Activated CD4-positive, alpha-beta memory T cell treated with anti-CD3 and anti-CD28 coated beads, Interleukin-2, amount 10 ng/mL, durations not matched to agents 7 days and 5 days (primary cell): ENCODE measurements at regions of chr12 and their contacts with region 1.

Region 1: GRCh38 chr12:68610370-68611093 is at the start of gene RAP1B:
- DNase-seq: peak; percentile 92
- H3K4me3 Mint-ChIP-seq: peak within 1 kb of the TSS; percentile 83
- H3K27ac Mint-ChIP-seq: peak within 1 kb of the TSS; percentile 94
- H3K4me1 Mint-ChIP-seq: peaks cover 38% of the 10 kb centered on the region
- H3K27me3 Mint-ChIP-seq: no peaks in the 10 kb centered on the region
- total RNA-seq, gene RAP1B: 290 to 291 TPM

Region 2: GRCh38 chr12:68331869-68332727 is 278.4 kb before region 1 on chr12 and contains the start of gene MDM1:
- CTCF ChIA-PET with region 1: interaction called, 4 read pairs
- POLR2A ChIA-PET with region 1: interaction called, 22 read pairs
- DNase-seq: peak; percentile 95
- H3K4me3 Mint-ChIP-seq: peak within 1 kb of the TSS; percentile 87
- H3K27ac Mint-ChIP-seq: peak within 1 kb of the TSS; percentile 65
- H3K4me1 Mint-ChIP-seq: peaks cover 42% of the 10 kb centered on the region
- H3K27me3 Mint-ChIP-seq: peaks cover 11% of the 10 kb centered on the region
- total RNA-seq, gene MDM1: 21.8 to 24.4 TPM

Region 3: DNA sequence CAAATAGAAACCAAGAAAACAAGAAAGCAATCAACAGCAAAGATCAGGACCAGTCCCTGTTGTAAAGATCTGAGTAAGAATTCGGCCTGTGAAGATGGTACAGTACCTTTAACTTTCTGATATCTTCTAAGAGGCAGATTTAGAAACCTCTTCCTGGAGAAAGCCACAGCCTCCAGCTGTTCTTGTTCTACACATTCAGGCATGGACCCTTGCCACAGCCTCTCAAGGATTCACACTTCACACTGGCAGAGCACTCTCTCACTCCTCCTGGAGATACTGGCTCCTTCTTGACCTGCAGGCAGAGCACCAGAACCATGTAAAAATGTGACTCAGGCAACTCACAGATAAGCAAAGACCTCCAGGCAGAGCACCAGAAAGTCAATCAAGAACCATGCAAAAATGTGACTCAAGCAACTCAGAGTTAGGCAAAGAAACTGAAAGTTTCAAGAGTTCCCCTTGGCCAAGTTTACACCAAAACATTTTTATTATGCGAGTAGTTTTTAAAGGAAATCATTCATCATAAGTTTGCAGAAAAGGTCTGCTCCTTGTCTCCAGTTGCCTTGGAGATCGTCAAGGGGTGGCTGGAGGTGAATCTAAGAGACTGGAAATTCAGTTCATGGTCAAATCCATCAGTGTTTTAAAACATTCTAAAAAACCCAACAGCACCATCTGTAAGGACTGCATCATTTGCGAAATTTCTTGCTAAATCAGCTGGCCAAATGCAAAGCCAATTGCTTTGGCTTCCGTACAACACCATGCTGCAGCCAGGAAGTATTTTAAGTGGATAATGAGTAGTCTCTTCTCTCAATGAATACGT is 159.1 kb before region 1 on chr12:
- CTCF ChIA-PET with region 1: no interaction called
- POLR2A ChIA-PET with region 1: interaction called, 13 read pairs
- DNase-seq: peak; percentile 64
- H3K4me3 Mint-ChIP-seq: peak overlapping the region; percentile 67
- H3K27ac Mint-ChIP-seq: peak overlapping the region; percentile 96
- H3K4me1 Mint-ChIP-seq: peaks cover 93% of the 10 kb centered on the region
- H3K27me3 Mint-ChIP-seq: no peaks in the 10 kb centered on the region

Region 4: DNA sequence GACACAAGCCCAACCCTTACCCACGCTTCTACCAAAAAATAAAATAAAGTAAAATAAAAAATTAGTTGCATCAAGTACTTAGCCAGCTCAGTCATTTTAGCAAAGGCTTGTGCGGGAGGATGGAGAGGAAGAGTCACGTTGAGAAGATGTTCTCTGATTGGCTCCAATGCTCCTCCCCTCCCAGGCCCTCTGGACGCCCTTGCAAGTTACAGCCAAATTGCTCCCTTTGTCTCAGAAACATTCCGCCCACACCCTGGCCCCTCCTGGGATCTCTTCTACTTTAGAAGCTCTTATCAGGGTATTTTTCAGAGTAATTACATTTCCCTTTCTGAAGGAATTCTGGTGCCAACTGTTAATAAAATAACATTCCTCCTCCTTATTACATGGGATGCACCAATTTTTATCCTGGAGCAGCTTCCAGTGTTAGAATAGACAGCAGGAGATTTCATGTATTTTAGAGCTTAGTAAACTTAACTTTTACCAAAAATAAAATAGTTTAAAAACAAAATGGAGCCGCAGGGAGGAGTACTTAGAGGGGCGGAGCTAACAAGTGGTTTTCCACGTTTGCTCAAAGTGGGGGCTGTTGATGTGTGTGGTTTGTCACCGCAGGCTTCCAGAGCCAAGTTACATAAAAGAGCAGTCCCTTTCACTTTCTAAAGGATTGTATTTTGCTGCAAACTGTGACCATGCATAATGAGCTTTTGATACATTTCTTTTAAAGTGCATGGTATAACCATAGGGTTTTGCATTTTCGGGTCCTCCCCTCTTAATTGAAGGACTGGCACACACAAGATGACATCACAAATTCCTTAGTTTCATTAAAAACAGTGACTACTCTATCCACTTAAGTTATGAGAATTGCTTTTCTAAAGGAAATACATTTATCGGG is 71.6 kb before region 1 on chr12:
- CTCF ChIA-PET with region 1: no interaction called
- POLR2A ChIA-PET with region 1: interaction called, 15 read pairs
- DNase-seq: peak; percentile 65
- H3K4me3 Mint-ChIP-seq: no peak overlapping the region
- H3K27ac Mint-ChIP-seq: no peak overlapping the region
- H3K4me1 Mint-ChIP-seq: peaks cover 43% of the 10 kb centered on the region
- H3K27me3 Mint-ChIP-seq: no peaks in the 10 kb centered on the region

Region 5: GRCh38 chr12:68675101-68675842 is 64.7 kb after region 1 on chr12:
- CTCF ChIA-PET with region 1: no interaction called
- POLR2A ChIA-PET with region 1: interaction called, 26 read pairs
- DNase-seq: peak; percentile 82
- H3K4me3 Mint-ChIP-seq: peak overlapping the region; percentile 33
- H3K27ac Mint-ChIP-seq: peak overlapping the region; percentile 93
- H3K4me1 Mint-ChIP-seq: peaks cover 48% of the 10 kb centered on the region
- H3K27me3 Mint-ChIP-seq: no peaks in the 10 kb centered on the region

Region 6: DNA sequence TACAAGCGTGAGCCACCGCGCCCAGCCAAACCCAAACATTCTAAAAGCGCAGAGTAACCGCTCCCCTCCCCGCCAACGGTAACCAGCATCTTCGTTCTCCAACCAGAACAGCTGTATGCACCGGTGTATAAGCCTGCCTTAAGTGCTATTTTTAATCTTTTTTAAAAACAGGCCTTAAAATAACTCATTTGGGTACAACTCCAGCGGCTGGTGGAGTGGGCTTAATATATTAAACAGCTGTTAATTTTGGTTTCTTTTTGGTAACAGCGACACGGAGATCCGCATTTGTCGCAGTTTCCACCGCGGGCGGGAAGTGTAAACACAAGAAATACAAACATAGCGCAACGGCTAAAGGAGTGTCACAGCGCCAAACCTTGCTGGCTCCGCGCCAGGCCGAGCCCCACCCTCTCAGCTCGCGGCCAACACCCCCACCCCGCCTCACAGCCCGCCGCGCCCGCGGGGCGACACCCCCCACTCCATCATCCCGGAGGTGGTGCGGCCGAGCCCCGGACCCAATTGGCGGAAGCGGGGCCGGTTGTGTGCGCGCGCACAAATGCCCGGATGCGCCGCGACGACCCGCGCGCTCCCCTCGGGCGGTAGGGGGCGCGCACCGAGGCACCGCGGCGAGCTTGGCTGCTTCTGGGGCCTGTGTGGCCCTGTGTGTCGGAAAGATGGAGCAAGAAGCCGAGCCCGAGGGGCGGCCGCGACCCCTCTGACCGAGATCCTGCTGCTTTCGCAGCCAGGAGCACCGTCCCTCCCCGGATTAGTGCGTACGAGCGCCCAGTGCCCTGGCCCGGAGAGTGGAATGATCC is 197.2 kb after region 1 on chr12 and contains the start of gene MDM2:
- CTCF ChIA-PET with region 1: no interaction called
- POLR2A ChIA-PET with region 1: interaction called, 31 read pairs
- DNase-seq: peak; percentile 99
- H3K4me3 Mint-ChIP-seq: peak within 1 kb of the TSS; percentile 98
- H3K27ac Mint-ChIP-seq: peak within 1 kb of the TSS; percentile 100
- H3K4me1 Mint-ChIP-seq: peaks cover 50% of the 10 kb centered on the region
- H3K27me3 Mint-ChIP-seq: no peaks in the 10 kb centered on the region
- total RNA-seq, gene MDM2: 194 to 201 TPM